WTC11 (cell line): ENCODE measurements at regions of chr12 and their contacts with region 1.

Region 1: DNA sequence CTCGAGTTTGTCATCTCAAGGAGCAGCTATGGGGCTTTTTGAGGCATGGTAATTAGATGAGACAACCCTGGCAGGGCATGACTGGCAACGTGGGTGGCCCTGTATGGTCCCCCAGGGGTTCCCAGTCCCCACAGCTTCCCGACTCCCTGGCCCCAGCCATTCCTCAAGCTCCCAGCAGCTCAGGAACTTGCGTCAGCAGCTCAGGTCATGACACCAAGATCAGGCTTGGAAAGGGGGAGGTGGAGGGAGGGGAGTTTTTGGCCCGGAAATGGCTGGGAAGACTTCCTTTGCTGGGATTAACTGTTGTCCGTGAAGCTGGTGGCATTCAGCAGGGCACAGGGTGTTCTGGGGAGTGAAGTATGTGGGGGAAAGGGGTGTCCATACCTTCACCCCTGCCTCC is 10.4 kb upstream of the NRIP2 start:
- DNase-seq: no peak
- ATAC-seq: no peak
- H3K4me3 Mint-ChIP-seq: no peak overlapping the region
- H3K27ac Mint-ChIP-seq: no peak overlapping the region
- H3K4me1 Mint-ChIP-seq: peaks cover 15% of the 10 kb centered on the region
- H3K27me3 Mint-ChIP-seq: no peaks in the 10 kb centered on the region
- CTCF ChIP-seq: no peak

Region 2: GRCh38 chr12:2212971-2213869 is 632.1 kb before region 1 on chr12:
- CTCF ChIA-PET with region 1: no interaction called
- POLR2A ChIA-PET with region 1: no interaction called
- DNase-seq: no peak
- ATAC-seq: peak; percentile 74
- H3K4me3 Mint-ChIP-seq: no peak overlapping the region
- H3K27ac Mint-ChIP-seq: 0 out of 2 replicates have a peak overlapping the region, but pooled peaks have one; percentile 58
- H3K4me1 Mint-ChIP-seq: peaks cover 18% of the 10 kb centered on the region
- H3K27me3 Mint-ChIP-seq: no peaks in the 10 kb centered on the region
- CTCF ChIP-seq: no peak

Region 3: GRCh38 chr12:2739817-2740641 is 105.3 kb before region 1 on chr12:
- CTCF ChIA-PET with region 1: interaction called, 10 read pairs
- POLR2A ChIA-PET with region 1: no interaction called
- DNase-seq: no peak
- ATAC-seq: peak; percentile 27
- H3K4me3 Mint-ChIP-seq: no peak overlapping the region
- H3K27ac Mint-ChIP-seq: no peak overlapping the region
- H3K4me1 Mint-ChIP-seq: peaks cover 11% of the 10 kb centered on the region
- H3K27me3 Mint-ChIP-seq: no peaks in the 10 kb centered on the region; the same call in 1 of the 2 replicates
- CTCF ChIP-seq: 0 out of 2 replicates have a peak, but pooled peaks have one; percentile 32

Region 4: GRCh38 chr12:2769871-2770533 is 75.3 kb before region 1 on chr12:
- CTCF ChIA-PET with region 1: no interaction called
- POLR2A ChIA-PET with region 1: no interaction called
- DNase-seq: no peak
- ATAC-seq: no peak
- H3K4me3 Mint-ChIP-seq: no peak overlapping the region
- H3K27ac Mint-ChIP-seq: no peak overlapping the region
- H3K4me1 Mint-ChIP-seq: peaks cover 12% of the 10 kb centered on the region
- H3K27me3 Mint-ChIP-seq: peaks cover 2% of the 10 kb centered on the region; the same call in 1 of the 2 replicates
- CTCF ChIP-seq: no peak

Region 5: DNA sequence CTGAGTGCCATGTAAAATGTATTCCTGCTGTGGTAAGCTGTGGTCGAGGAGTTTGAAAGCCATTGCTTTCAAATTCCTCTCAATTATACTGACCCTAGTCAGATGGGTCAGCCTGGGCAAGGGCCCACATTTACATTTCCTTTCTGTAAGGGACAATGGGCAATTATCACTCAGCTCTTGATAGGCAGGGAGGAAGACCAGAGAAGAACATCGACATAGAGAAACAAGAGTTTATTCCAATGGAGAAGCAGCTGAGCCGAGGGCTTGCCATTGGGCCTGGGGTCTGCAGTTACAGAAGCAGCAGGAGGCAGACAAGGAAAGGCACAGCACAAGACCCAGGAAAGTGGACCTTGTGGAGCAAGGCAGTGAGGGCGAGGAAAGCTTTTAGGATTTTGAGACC is 20.1 kb before region 1 on chr12:
- CTCF ChIA-PET with region 1: interaction called, 14 read pairs
- POLR2A ChIA-PET with region 1: interaction called, 4 read pairs
- DNase-seq: no peak
- ATAC-seq: peak; percentile 53
- H3K4me3 Mint-ChIP-seq: no peak overlapping the region
- H3K27ac Mint-ChIP-seq: peak overlapping the region; percentile 22; the same call in 1 of the 2 replicates
- H3K4me1 Mint-ChIP-seq: peaks cover 22% of the 10 kb centered on the region
- H3K27me3 Mint-ChIP-seq: no peaks in the 10 kb centered on the region
- CTCF ChIP-seq: no peak

Region 6: GRCh38 chr12:2884810-2885209 is 39.5 kb after region 1 on chr12:
- CTCF ChIA-PET with region 1: interaction called, 35 read pairs
- POLR2A ChIA-PET with region 1: interaction called, 4 read pairs
- DNase-seq: no peak
- ATAC-seq: no peak
- H3K4me3 Mint-ChIP-seq: no peak overlapping the region
- H3K27ac Mint-ChIP-seq: peak overlapping the region; percentile 91
- H3K4me1 Mint-ChIP-seq: peaks cover 12% of the 10 kb centered on the region
- H3K27me3 Mint-ChIP-seq: no peaks in the 10 kb centered on the region
- CTCF ChIP-seq: no peak

Region 7: GRCh38 chr12:3034067-3034750 is 188.9 kb after region 1 on chr12:
- CTCF ChIA-PET with region 1: interaction called, 39 read pairs
- POLR2A ChIA-PET with region 1: no interaction called
- DNase-seq: peak; percentile 89
- ATAC-seq: peak; percentile 96
- H3K4me3 Mint-ChIP-seq: no peak overlapping the region
- H3K27ac Mint-ChIP-seq: peak overlapping the region; percentile 82
- H3K4me1 Mint-ChIP-seq: peaks cover 7% of the 10 kb centered on the region
- H3K27me3 Mint-ChIP-seq: no peaks in the 10 kb centered on the region
- CTCF ChIP-seq: peak; percentile 61

Region 8: DNA sequence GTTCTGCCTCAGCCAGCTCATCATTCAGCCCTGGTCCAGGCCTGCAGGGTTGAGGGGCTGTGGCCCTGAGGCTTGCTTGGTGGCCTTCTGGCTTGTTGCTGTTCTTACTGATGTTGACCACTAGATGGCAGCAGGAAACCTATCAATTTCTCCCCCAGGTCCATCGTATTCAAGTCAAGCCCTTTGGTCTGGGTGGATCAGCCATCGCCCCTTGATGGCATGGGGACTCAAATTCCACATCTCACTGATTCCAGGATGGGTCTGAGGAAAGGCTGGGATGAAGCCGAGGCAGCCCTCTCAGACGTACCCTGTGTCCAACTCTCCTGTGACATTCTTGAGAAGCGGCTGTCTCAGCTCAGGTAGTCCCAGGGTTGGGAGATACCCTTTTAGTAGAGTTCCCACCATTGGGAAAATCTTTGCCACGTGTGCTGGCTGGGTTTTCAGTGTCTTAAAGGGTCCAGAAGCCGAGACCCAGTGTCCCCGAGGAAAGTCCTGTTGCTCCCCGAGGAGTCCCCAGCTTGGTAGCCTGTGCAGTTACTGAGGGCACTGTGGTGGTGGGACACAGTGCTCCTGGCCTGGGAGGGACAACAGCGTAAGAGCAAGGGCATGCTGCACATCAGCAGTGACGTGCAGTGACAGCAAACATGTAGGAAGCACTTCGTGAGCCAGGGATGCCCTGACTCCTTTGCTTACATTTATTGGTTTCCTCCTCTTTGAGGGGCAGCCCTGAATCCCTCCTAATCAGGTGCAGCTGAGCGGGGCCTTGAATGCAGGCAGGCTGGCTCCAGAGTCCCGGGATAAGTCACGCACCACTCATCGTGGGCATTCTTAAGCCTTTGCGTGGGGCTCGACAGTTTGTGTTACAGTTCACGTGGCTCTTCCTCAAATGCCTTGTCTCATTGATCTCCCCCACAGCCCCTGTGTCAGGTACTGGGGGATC is 290.5 kb after region 1 on chr12:
- CTCF ChIA-PET with region 1: interaction called, 12 read pairs
- POLR2A ChIA-PET with region 1: no interaction called
- DNase-seq: peak; percentile 64
- ATAC-seq: peak; percentile 72
- H3K4me3 Mint-ChIP-seq: no peak overlapping the region
- H3K27ac Mint-ChIP-seq: no peak overlapping the region
- H3K4me1 Mint-ChIP-seq: peaks cover 61% of the 10 kb centered on the region
- H3K27me3 Mint-ChIP-seq: no peaks in the 10 kb centered on the region
- CTCF ChIP-seq: peak; percentile 82